ENCODE measurements at regions of chr18 and their contacts with region 1.

Region 1: DNA sequence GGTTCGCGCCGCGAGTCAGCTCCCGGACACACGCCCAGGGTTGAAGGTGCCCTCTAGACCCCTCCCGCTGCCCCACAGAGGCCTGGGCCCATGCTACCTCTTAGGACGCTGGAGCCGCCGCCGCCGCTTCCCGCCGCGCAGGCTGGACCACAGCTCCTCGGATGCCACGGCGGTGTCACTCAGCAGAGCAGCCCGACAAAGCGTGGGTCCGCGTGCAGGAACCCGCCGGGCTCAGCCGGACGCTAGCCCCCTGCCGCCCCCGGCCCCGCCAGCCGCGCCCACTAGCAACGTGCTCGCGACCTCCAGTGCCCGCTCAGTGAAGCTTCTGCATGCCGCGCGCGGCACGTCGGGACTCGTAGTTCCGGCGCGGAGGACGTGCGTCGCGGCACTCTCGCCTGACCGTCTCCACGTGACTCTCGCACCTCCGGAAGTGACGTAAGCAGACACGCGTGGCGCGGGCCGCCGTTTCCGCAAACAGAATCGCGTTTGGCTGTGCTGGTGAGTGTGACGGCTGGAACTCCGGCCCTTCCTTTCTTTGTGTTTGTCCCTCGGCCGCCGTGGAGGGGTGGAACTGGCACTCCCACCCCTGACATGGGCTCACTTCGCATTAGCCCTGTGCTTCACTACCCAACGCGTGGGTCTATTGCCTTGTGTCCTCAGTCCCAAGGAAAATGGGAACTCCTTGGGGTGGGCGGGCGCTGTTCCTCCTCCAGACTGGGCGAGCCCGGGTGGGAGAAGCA is at the starts of genes FAM210A and RNMT:
- DNase-seq: peak; percentile 98
- total RNA-seq, gene FAM210A: 48.4 TPM
- total RNA-seq, gene RNMT: 27.0 TPM

Region 2: GRCh38 chr18:13558124-13558523 is 168.3 kb before region 1 on chr18:
- intact Hi-C with region 1: loop called (anchors 2 kb)
- DNase-seq: no peak

Region 3: GRCh38 chr18:13597068-13597467 is 129.3 kb before region 1 on chr18:
- intact Hi-C with region 1: no loop called
- DNase-seq: no peak

Region 4: GRCh38 chr18:13629841-13630715 is 96.3 kb before region 1 on chr18:
- intact Hi-C with region 1: loop called (anchors 5 kb)
- DNase-seq: no peak

Region 5: DNA sequence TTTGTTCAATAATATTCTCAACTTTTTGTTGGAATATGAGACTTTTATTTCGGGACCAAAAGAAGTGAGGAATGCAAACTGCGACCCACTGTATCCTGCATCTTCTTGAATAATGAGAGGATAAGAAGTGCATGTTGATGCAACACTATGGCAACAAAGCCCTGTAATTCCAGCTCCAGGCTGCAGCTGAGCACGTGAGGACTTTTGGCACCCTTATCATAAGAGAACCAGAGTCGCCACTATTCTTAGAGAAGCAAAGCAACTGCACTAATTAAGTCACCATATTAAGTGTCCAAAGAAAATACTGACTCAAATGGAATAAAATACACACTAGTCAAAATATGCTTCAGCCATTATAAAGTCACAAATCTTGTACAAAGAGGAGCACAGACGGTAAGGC is 65.9 kb before region 1 on chr18:
- intact Hi-C with region 1: loop called (anchors 5 kb)
- DNase-seq: no peak

Region 6: GRCh38 chr18:13982136-13982535 is 255.7 kb after region 1 on chr18:
- intact Hi-C with region 1: no loop called
- DNase-seq: no peak

Measured in cardiac septum (tissue), 1 donor.